ENCODE measurements at regions of chrX and their contacts with region 1.

Region 1: GRCh38 chrX:1657367-1658070 is 42.7 kb downstream of the ASMT start:
- DNase-seq: peak; percentile 62
- ATAC-seq: peak; percentile 76
- H3K4me3 ChIP-seq: peak overlapping the region; percentile 88
- H3K27ac ChIP-seq: peak overlapping the region; percentile 90
- H3K4me1 ChIP-seq: peaks cover 9% of the 10 kb centered on the region
- H3K27me3 ChIP-seq: no peaks in the 10 kb centered on the region
- CTCF ChIP-seq: peak in 1 of 3 experiments; percentile 14; a peak in 2 of 6 replicates
- EP300 ChIP-seq: peak; percentile 37 to 39; a peak in 2 of 4 replicates
- POLR2A ChIP-seq: peak; percentile 85
- RAD21 ChIP-seq: peak; percentile 28; the same call in 1 of the 2 replicates

Region 2: DNA sequence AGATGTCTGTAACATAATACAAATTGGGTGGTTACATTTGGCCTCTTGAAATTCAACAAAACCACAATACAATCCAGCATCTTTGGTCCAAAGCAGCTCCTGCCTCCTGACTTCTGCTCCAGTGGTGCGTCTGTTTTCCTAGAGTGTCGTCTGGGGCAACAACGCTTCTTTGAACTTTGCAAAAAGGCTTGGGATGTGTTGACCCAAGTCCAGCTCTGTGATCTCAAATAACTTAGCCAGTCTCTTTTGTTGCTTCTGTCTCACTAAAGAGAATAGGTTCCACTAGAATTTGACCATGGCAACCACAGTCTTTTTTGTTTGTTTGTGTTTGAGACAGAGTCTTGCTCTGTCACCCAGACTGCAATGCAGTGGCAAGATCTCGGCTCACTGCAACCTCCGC is 519.2 kb after region 1 on chrX:
- CTCF ChIA-PET with region 1: no interaction called
- POLR2A ChIA-PET with region 1: no interaction called
- RAD21 ChIA-PET with region 1: no interaction called
- SMC1A ChIA-PET with region 1: no interaction called
- in situ Hi-C with region 1: no loop called
- intact Hi-C with region 1: loop called (anchors 2 kb)
- DNase-seq: no peak
- ATAC-seq: no peak
- H3K4me3 ChIP-seq: no peak overlapping the region
- H3K27ac ChIP-seq: no peak overlapping the region
- H3K4me1 ChIP-seq: peaks cover 23% of the 10 kb centered on the region
- H3K27me3 ChIP-seq: no peaks in the 10 kb centered on the region
- CTCF ChIP-seq: no peak
- EP300 ChIP-seq: no peak
- POLR2A ChIP-seq: no peak
- RAD21 ChIP-seq: no peak

Region 3: DNA sequence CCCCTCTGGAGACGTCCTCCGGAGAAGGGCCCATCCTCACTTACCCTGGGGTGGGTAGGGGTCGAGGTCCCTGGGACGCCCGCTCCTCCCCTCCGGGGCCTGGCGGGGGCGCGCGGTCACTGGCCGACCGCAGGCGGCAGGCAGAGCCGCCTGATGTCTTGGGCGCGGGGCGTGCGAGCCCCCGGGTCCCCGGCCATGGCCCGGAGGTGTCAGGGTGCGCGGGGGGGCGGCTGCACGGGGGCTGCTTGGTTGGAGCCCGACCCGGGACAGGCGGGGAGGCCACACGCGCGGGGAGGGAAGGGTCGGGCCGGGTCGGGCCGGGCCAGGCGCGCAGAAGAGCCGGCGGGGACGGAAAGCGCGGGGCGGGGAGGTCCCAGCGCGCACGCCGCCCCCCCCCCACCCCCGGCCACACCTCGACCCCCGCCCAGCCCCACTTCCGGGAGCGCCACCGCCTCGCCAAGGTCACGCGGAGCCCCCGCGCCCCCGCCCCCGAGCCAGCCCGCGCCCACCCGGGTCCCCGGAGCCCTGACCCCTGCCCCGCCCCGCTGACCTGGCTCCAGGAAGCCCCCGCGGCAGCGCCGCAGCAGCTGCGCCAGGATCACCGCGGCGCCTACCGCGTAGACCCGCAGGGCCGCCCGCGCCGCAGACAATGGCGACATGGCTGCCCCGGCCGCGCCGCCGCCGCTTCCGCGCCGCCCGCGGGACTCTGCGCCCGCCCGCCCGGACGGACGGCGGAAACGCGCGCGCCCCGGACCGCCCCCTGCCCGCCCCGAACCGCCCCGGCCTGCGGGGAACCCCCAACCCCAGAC is 843.0 kb after region 1 on chrX and contains the starts of genes DHRSX and ZBED1:
- CTCF ChIA-PET with region 1: no interaction called
- POLR2A ChIA-PET with region 1: no interaction called
- RAD21 ChIA-PET with region 1: no interaction called
- SMC1A ChIA-PET with region 1: no interaction called
- in situ Hi-C with region 1: loop called (anchors 10 kb)
- intact Hi-C with region 1: loop called (anchors 5 kb)
- DNase-seq: no peak
- ATAC-seq: peak; percentile 77
- H3K4me3 ChIP-seq: peak within 1 kb of the TSS; percentile 90
- H3K27ac ChIP-seq: peak within 1 kb of the TSS; percentile 88
- H3K4me1 ChIP-seq: peaks cover 22% of the 10 kb centered on the region
- H3K27me3 ChIP-seq: no peaks in the 10 kb centered on the region
- CTCF ChIP-seq: peak; percentile 7 to 35 (median 13); a peak in 3 of 6 replicates
- EP300 ChIP-seq: no peak
- POLR2A ChIP-seq: peak; percentile 88
- RAD21 ChIP-seq: peak; percentile 40; the same call in 1 of the 2 replicates
- polyA plus RNA-seq, gene DHRSX: 1.7 to 3.3 TPM
- polyA plus RNA-seq, gene ZBED1: 1.9 to 4.8 TPM

Region 4: DNA sequence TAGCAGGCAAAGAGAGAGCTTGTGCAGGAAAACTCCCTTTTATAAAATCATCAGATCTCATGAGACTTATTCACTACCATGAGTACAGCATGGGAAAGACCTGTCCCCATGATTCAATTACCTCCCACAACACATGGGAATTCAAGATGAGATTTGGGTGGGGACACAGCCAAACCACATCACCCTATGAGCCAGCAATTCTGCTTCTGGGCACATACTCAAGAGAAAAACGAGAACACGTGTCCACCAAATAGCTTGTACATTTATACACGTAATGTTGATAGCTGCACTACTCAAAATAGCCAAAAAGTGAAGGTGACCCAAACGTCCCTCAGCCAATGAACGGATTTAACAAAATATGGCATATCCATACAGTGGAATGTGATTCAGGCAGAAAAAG is 937.7 kb after region 1 on chrX:
- CTCF ChIA-PET with region 1: no interaction called
- POLR2A ChIA-PET with region 1: no interaction called
- RAD21 ChIA-PET with region 1: no interaction called
- SMC1A ChIA-PET with region 1: no interaction called
- in situ Hi-C with region 1: no loop called
- intact Hi-C with region 1: loop called (anchors 1 kb)
- DNase-seq: no peak
- ATAC-seq: no peak
- H3K4me3 ChIP-seq: no peak overlapping the region
- H3K27ac ChIP-seq: no peak overlapping the region
- H3K4me1 ChIP-seq: no peaks in the 10 kb centered on the region
- H3K27me3 ChIP-seq: no peaks in the 10 kb centered on the region
- CTCF ChIP-seq: no peak
- EP300 ChIP-seq: no peak
- POLR2A ChIP-seq: no peak
- RAD21 ChIP-seq: no peak

Region 5: GRCh38 chrX:2608638-2609430 is 951.3 kb after region 1 on chrX:
- CTCF ChIA-PET with region 1: no interaction called
- POLR2A ChIA-PET with region 1: no interaction called
- RAD21 ChIA-PET with region 1: no interaction called
- SMC1A ChIA-PET with region 1: no interaction called
- in situ Hi-C with region 1: loop called (anchors 5 kb)
- intact Hi-C with region 1: no loop called
- DNase-seq: no peak
- ATAC-seq: peak; percentile 96
- H3K4me3 ChIP-seq: peak overlapping the region; percentile 97
- H3K27ac ChIP-seq: peak overlapping the region; percentile 59
- H3K4me1 ChIP-seq: no peaks in the 10 kb centered on the region
- H3K27me3 ChIP-seq: no peaks in the 10 kb centered on the region
- CTCF ChIP-seq: no peak
- EP300 ChIP-seq: no peak
- POLR2A ChIP-seq: peak; percentile 82
- RAD21 ChIP-seq: no peak

Region 6: GRCh38 chrX:2627272-2627867 is 969.9 kb after region 1 on chrX:
- CTCF ChIA-PET with region 1: no interaction called
- POLR2A ChIA-PET with region 1: no interaction called
- RAD21 ChIA-PET with region 1: no interaction called
- SMC1A ChIA-PET with region 1: no interaction called
- in situ Hi-C with region 1: no loop called
- intact Hi-C with region 1: loop called (anchors 1 kb)
- DNase-seq: no peak
- ATAC-seq: peak; percentile 99
- H3K4me3 ChIP-seq: no peak overlapping the region
- H3K27ac ChIP-seq: no peak overlapping the region
- H3K4me1 ChIP-seq: no peaks in the 10 kb centered on the region
- H3K27me3 ChIP-seq: no peaks in the 10 kb centered on the region
- CTCF ChIP-seq: peak; percentile 67 to 69 (median 69)
- EP300 ChIP-seq: no peak
- POLR2A ChIP-seq: no peak
- RAD21 ChIP-seq: peak; percentile 83

Region 7: DNA sequence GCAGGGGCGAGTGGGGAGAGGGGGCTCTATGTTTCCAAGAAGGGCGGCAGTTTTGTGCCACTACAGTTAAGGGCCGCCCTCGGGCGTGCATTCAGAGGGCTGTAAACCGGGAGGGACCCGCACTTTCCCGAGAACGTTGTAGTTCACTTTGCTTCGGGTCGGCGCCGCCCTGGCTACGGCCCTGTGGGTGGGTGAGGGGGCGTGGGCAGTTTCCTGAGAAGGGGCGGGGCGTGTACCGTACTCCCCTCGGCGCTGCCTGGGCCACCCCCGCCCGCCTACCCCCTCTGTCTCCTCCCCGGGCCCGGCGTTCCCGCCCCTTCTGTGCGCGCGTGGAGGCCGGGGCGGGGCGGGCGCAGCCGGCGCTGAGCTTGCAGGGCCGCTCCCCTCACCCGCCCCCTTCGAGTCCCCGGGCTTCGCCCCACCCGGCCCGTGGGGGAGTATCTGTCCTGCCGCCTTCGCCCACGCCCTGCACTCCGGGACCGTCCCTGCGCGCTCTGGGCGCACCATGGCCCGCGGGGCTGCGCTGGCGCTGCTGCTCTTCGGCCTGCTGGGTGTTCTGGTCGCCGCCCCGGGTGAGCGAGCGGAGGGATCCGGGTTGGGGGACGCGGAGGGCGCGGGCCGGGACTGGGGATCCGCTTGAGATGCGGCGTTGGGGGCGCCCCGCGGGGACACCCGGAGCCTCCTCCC is 1033.5 kb after region 1 on chrX and contains the start of gene CD99:
- CTCF ChIA-PET with region 1: no interaction called
- POLR2A ChIA-PET with region 1: no interaction called
- RAD21 ChIA-PET with region 1: no interaction called
- SMC1A ChIA-PET with region 1: no interaction called
- in situ Hi-C with region 1: no loop called
- intact Hi-C with region 1: loop called (anchors 10 kb)
- DNase-seq: peak; percentile 46
- ATAC-seq: peak; percentile 94
- H3K4me3 ChIP-seq: peak within 1 kb of the TSS; percentile 91
- H3K27ac ChIP-seq: peak within 1 kb of the TSS; percentile 65
- H3K4me1 ChIP-seq: peaks cover under 1% of the 10 kb centered on the region; the same call in 1 of the 2 replicates
- H3K27me3 ChIP-seq: no peaks in the 10 kb centered on the region
- CTCF ChIP-seq: no peak
- EP300 ChIP-seq: no peak
- POLR2A ChIP-seq: peak; percentile 81
- RAD21 ChIP-seq: no peak
- polyA plus RNA-seq, gene CD99: 24.8 to 52.1 TPM